ENCODE measurements at regions of chr9 and their contacts with region 1.

Region 1: DNA sequence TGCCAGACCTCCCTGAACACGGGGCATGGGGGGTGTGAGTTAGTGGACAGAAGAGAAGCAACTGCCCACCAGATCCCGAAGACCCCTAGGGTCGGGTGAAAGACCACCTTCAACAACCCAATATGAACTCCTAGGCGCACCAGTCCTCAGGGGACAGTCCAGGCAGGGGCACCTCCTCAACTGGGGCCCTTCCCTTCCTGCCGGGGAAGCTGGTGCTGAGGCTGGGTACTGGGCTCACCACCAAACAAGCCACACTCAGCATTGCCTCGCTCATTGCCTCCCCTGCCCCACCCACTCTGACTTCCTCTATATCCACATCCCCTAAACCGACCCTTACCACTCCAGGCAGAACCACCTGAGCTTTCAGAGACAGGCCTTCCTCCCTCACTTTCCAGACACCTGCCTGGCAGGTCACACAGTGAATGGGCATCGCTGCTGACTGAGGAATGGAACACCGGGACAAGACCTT is 42.5 kb downstream of the SEMA4D start:
- DNase-seq: peak in 7 of 9 donors; percentile 44 to 69 (median 64)
- ATAC-seq: peak; percentile 68
- H3K4me3 ChIP-seq: peak overlapping the region; percentile 42
- H3K4me3 Mint-ChIP-seq: peak overlapping the region; percentile 75 to 88 (median 84)
- H3K27ac ChIP-seq: peak overlapping the region; percentile 77
- H3K27ac Mint-ChIP-seq: peak overlapping the region; percentile 73 to 99 (median 98)
- H3K4me1 ChIP-seq: peaks cover 51 to 88% of the 10 kb centered on the region in 2 donors
- H3K4me1 Mint-ChIP-seq: peaks cover 70 to 100% (median 89%) of the 10 kb centered on the region in 7 donors
- H3K27me3 ChIP-seq: no peaks in the 10 kb centered on the region
- H3K27me3 Mint-ChIP-seq: no peaks in the 10 kb centered on the region

Region 2: DNA sequence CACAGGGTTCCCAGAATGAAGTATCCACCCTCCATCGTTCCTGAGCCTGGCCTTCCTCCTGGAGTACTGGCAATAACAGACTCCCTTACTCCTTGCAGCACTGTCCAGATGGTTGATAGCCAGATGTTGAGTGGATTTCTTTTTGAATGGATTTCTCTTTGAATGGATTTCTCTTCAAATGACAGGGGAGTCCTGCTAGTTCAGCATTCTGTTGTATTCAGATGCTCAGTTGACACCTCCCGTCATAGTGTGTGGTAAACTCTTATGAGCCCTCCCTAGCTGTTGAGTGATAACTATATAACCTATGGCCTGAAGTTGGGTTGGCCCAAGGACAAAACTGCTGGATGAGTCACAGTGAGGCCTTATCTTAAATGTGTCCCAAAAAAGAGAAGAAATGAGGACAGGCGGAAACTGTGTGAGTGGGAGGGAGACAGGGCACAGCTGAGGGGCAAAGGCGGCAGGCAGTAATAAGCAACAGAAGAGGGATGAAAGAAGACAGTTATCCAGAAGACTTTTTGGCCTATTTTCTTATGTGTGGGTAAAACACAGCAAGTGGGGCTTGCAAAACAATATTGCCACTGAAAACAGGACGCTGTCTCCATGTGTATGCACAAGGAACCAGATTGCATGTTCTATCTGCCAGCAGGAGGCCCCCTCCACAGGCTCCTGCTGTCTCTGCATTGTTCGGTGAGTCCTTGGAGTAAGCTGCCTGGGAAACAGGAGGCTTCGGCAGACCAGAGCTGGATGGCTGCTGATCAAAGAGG is 673.6 kb before region 1 on chr9:
- CTCF ChIA-PET with region 1: no interaction called
- POLR2A ChIA-PET with region 1: no interaction called
- intact Hi-C with region 1: no loop called
- DNase-seq: no peak
- ATAC-seq: no peak
- H3K4me3 ChIP-seq: no peak overlapping the region
- H3K4me3 Mint-ChIP-seq: no peak overlapping the region
- H3K27ac ChIP-seq: no peak overlapping the region
- H3K27ac Mint-ChIP-seq: no peak overlapping the region
- H3K4me1 ChIP-seq: no peaks in the 10 kb centered on the region
- H3K4me1 Mint-ChIP-seq: peaks cover 0 to 8% (median 5%) of the 10 kb centered on the region in 7 donors
- H3K27me3 ChIP-seq: no peaks in the 10 kb centered on the region
- H3K27me3 Mint-ChIP-seq: peaks cover 0 to 22% (median 17%) of the 10 kb centered on the region in 5 donors

Region 3: DNA sequence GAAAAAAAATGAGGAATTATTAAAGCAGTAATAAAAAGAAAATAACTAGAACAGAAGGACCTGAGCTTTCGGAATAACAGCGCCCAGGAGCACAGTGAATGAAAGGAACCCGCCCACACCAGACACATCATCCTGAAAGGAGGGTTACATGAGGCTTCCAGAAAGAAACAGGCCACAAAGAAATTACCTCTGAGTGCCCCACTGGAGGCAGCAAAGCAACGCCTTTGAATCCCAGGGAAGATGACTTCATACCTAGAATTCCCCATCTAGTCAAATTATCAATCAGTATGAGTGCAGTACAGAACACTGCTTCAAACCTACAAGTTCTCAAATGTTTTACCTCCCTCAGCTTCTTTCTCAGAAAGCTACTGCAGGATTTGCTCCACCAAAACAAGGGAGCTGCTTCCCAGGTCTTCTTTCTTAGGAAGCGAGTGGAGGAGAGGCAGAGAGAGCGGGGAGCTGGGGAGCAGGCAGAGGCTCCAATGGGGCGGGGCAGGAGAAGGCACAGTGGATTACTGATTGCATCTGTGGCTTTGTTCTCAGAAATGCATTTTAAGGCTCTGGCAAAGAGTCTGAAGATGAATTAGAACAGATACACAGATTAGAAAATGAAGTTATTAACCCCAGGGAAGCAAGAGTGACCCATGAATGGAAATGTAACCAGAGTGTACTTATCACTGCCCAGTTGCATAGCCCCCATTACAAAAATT is 44.6 kb before region 1 on chr9:
- CTCF ChIA-PET with region 1: no interaction called
- POLR2A ChIA-PET with region 1: interaction called, 6 read pairs
- intact Hi-C with region 1: loop called in 1 of 2 experiments (anchors 2 kb)
- DNase-seq: peak in 2 of 9 donors; percentile 29 to 60
- ATAC-seq: peak; percentile 37
- H3K4me3 ChIP-seq: no peak overlapping the region
- H3K4me3 Mint-ChIP-seq: peak overlapping the region in 9 of 10 donors; percentile 7 to 85 (median 54)
- H3K27ac ChIP-seq: peak overlapping the region; percentile 20
- H3K27ac Mint-ChIP-seq: peak overlapping the region; percentile 67 to 93 (median 84)
- H3K4me1 ChIP-seq: peaks cover 57 to 62% of the 10 kb centered on the region in 2 donors
- H3K4me1 Mint-ChIP-seq: peaks cover 56 to 100% (median 93%) of the 10 kb centered on the region in 7 donors
- H3K27me3 ChIP-seq: no peaks in the 10 kb centered on the region
- H3K27me3 Mint-ChIP-seq: no peaks in the 10 kb centered on the region

Region 4: DNA sequence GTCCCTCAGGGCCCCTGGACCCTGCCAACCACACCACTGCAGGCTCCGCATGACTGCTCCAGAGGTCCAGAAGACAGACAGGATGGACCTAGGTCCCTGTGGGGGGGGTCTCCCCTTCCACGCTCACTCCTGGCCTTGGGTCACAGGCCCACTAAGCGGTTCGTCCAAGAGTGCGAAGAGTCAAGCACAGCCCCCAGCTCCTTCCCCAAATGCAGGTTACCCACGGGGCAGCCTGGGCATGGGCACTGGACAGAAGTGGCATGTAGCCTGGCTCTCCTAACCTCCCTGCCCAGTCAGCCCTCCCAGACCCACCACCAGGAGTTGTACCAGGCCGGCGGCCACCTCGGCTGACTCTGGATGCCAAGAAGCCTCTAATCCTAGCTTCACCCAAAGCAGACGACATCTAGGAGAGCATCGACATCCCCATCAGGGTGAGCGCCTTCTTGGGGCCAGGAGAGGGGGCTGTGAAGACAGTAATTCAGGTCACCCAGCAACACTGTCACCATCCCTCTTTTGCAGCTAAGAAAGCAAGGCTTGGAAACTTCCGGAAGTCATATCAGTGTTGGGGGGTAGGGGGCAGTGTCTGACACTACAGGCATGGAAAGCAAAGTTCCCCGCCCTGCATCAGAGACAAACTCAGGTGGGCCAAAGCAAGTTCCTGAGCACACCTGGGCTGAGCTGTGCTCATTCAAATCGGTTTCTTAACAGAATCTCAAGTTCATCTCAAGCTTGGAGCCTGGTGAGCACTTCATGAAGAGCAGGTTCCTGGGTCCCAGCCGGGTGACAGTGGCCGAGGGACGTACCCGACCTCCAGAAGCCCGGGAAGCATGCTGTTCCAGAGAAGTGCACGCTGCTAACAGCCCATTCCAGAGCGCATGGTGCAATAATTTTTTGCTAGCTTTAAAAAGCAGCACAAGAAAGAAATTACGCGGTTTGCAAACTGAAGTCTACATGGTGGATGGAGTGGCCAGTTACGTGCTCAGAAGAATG is 26.2 kb before region 1 on chr9:
- CTCF ChIA-PET with region 1: interaction called, 11 read pairs
- POLR2A ChIA-PET with region 1: interaction called, 3 read pairs
- intact Hi-C with region 1: no loop called
- DNase-seq: peak in 7 of 9 donors; percentile 68 to 83 (median 77)
- ATAC-seq: peak; percentile 76
- H3K4me3 ChIP-seq: no peak overlapping the region
- H3K4me3 Mint-ChIP-seq: peak overlapping the region in 9 of 10 donors; percentile 38 to 78 (median 63)
- H3K27ac ChIP-seq: peak overlapping the region; percentile 63
- H3K27ac Mint-ChIP-seq: peak overlapping the region; percentile 84 to 97 (median 92)
- H3K4me1 ChIP-seq: peaks cover 81 to 84% of the 10 kb centered on the region in 2 donors
- H3K4me1 Mint-ChIP-seq: peaks cover 67 to 100% (median 95%) of the 10 kb centered on the region in 7 donors
- H3K27me3 ChIP-seq: no peaks in the 10 kb centered on the region
- H3K27me3 Mint-ChIP-seq: no peaks in the 10 kb centered on the region

Region 5: DNA sequence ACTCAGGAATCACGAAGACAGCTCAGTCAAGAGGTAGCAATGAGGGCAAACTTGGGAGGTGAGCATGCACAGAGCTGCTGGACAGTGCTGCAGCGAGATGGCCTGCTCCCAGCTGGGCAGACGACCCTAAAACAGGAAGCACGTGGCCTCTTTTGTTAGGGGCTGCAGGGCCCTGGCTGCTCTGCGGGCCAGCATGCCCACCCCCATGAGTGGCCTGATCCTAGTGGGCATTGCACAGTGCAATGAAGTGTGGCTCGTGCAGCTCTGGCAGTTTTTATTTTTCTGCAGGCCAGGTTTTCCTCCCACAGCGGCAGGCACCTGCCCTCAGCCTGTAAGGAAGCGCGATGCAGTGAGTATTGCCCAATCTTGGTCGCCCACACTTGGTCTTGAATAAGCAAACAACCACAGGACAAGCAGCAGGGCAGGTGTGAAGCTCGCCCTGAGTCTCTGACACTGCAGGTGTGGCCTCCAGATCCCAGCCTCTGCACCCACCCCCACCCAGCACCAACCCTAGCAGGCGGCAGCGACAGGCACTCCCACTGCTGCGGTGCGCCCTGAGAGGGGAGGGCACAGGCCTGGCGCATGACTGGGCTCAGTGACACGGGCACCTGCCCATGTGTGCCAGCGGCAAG is 18.3 kb before region 1 on chr9:
- CTCF ChIA-PET with region 1: no interaction called
- POLR2A ChIA-PET with region 1: interaction called, 34 read pairs
- intact Hi-C with region 1: loop called in 1 of 2 experiments (anchors 2 kb)
- DNase-seq: peak in 6 of 9 donors; percentile 42 to 59 (median 56)
- ATAC-seq: peak; percentile 83
- H3K4me3 ChIP-seq: no peak overlapping the region
- H3K4me3 Mint-ChIP-seq: peak overlapping the region; percentile 44 to 80 (median 74)
- H3K27ac ChIP-seq: peak overlapping the region; percentile 62
- H3K27ac Mint-ChIP-seq: peak overlapping the region; percentile 80 to 95 (median 85)
- H3K4me1 ChIP-seq: peaks cover 74 to 75% of the 10 kb centered on the region in 2 donors
- H3K4me1 Mint-ChIP-seq: peaks cover 75 to 98% (median 92%) of the 10 kb centered on the region in 7 donors
- H3K27me3 ChIP-seq: no peaks in the 10 kb centered on the region
- H3K27me3 Mint-ChIP-seq: no peaks in the 10 kb centered on the region

Region 6: DNA sequence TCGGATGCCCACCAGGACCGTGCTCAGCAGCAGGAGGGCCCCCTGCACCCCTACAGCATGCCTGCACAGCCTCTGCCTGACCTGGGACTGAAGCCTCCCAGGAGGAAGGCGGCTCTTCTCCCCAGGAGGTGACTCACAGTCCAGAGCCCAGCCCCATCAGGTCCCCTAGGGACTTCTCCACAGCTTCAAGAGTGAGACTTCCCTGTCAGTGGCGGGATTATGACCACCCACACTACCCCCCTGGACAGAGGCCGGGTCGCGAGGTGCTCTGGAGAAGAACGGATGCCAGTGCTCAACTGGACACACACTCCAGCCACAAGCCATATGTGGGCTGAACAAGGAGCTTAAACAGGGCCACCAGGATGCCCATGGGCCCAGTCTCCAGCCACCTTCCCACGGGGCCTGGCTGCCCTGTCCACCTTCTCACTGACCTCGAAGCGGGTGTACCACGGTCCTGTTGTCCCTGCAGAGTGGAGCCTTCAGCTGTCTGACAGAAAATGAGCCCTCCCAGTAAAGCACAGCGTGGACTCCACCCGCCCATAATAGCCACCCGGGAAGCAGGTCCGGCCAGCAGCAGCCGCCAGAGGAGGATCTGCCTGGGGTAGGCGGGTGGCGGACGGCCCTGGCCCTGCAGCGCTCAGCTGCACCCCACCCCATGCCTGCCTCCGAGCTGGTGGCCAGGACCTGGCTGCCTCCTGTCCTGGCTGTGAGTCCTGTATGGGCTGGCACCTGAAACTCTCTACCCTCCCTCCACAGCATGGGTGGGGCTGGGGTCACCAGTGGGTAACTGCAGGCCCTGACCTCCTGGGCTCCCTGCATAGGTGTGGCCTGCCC is 12.2 kb before region 1 on chr9:
- CTCF ChIA-PET with region 1: interaction called, 3 read pairs
- POLR2A ChIA-PET with region 1: interaction called, 34 read pairs
- intact Hi-C with region 1: loop called in 1 of 2 experiments (anchors 1 kb)
- DNase-seq: no peak
- ATAC-seq: peak; percentile 36
- H3K4me3 ChIP-seq: no peak overlapping the region
- H3K4me3 Mint-ChIP-seq: peak overlapping the region in 3 of 10 donors; percentile 54 to 82 (median 67)
- H3K27ac ChIP-seq: peak overlapping the region; percentile 72
- H3K27ac Mint-ChIP-seq: peak overlapping the region; percentile 76 to 99 (median 96)
- H3K4me1 ChIP-seq: peaks cover 84 to 89% of the 10 kb centered on the region in 2 donors
- H3K4me1 Mint-ChIP-seq: peaks cover 62 to 91% (median 85%) of the 10 kb centered on the region in 7 donors
- H3K27me3 ChIP-seq: no peaks in the 10 kb centered on the region
- H3K27me3 Mint-ChIP-seq: no peaks in the 10 kb centered on the region

Region 7: GRCh38 chr9:89489548-89490530 is 34.4 kb after region 1 on chr9:
- CTCF ChIA-PET with region 1: interaction called, 6 read pairs
- POLR2A ChIA-PET with region 1: interaction called, 12 read pairs
- intact Hi-C with region 1: loop called in 1 of 2 experiments (anchors 5 kb)
- DNase-seq: peak in 8 of 9 donors; percentile 15 to 87 (median 78)
- ATAC-seq: peak; percentile 90
- H3K4me3 ChIP-seq: peak overlapping the region; percentile 22
- H3K4me3 Mint-ChIP-seq: peak overlapping the region; percentile 60 to 100 (median 88)
- H3K27ac ChIP-seq: peak overlapping the region; percentile 69
- H3K27ac Mint-ChIP-seq: peak overlapping the region; percentile 82 to 98 (median 89)
- H3K4me1 ChIP-seq: peaks cover 81 to 82% of the 10 kb centered on the region in 2 donors
- H3K4me1 Mint-ChIP-seq: peaks cover 78 to 100% (median 92%) of the 10 kb centered on the region in 7 donors
- H3K27me3 ChIP-seq: no peaks in the 10 kb centered on the region
- H3K27me3 Mint-ChIP-seq: no peaks in the 10 kb centered on the region

Region 8: GRCh38 chr9:89497978-89498851 is 42.8 kb after region 1 on chr9 and contains the start of gene SEMA4D:
- CTCF ChIA-PET with region 1: no interaction called
- POLR2A ChIA-PET with region 1: interaction called, 12 read pairs
- intact Hi-C with region 1: loop called in 1 of 2 experiments (anchors 5 kb)
- DNase-seq: peak in 2 of 9 donors; percentile 48 to 71
- ATAC-seq: peak; percentile 22
- H3K4me3 ChIP-seq: peak within 1 kb of the TSS; percentile 67
- H3K4me3 Mint-ChIP-seq: peak within 1 kb of the TSS; percentile 85 to 100 (median 98)
- H3K27ac ChIP-seq: peak within 1 kb of the TSS; percentile 76
- H3K27ac Mint-ChIP-seq: peak within 1 kb of the TSS; percentile 86 to 99 (median 94)
- H3K4me1 ChIP-seq: peaks cover 72 to 75% of the 10 kb centered on the region in 2 donors
- H3K4me1 Mint-ChIP-seq: peaks cover 72 to 90% (median 77%) of the 10 kb centered on the region in 7 donors
- H3K27me3 ChIP-seq: no peaks in the 10 kb centered on the region
- H3K27me3 Mint-ChIP-seq: no peaks in the 10 kb centered on the region
- total RNA-seq, gene SEMA4D: 389 to 465 (median 460) TPM

Region 9: DNA sequence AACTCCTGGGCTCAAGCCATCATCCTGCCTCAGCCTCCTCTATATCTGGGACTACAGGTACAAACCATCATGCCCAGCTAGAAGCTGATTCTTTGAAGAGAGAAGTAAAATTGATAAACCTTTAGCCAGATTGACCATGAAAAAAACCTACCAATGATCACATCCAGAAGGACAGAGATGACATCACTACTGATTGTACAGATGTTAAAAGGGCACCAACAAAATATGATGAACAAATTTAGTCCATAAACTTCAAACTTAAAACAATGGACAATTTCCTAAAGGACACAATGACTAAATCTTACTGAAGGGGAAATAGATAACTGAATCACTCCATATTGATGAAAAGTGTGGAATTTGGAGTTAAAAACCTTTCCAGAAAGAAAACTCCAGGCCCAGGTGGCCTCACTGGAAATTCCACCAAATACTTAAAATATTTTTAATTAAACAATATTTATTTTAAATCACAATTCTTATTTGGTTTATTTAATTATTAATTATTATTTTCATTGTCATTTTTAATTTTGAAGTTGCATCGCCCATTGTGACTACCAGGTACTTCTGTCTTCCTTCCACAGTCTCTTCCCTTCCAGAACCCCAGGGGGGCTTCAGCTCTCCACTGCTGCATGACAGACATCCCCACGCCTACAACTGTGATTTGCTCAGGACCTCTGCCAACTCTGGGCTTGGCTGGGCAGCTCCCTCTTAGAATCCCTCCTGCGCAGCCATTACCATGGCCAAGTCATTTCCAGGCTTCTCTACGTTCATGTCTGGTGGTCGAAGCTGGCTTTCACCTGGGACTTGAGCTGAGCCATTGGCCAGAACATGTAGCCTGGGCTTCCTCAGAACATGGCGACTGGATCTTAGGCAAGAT is 132.9 kb after region 1 on chr9:
- CTCF ChIA-PET with region 1: no interaction called
- POLR2A ChIA-PET with region 1: no interaction called
- intact Hi-C with region 1: no loop called
- DNase-seq: no peak
- ATAC-seq: no peak
- H3K4me3 ChIP-seq: no peak overlapping the region
- H3K4me3 Mint-ChIP-seq: no peak overlapping the region
- H3K27ac ChIP-seq: no peak overlapping the region
- H3K27ac Mint-ChIP-seq: no peak overlapping the region
- H3K4me1 ChIP-seq: no peaks in the 10 kb centered on the region
- H3K4me1 Mint-ChIP-seq: no peaks in the 10 kb centered on the region
- H3K27me3 ChIP-seq: no peaks in the 10 kb centered on the region
- H3K27me3 Mint-ChIP-seq: peaks cover 9 to 61% (median 13%) of the 10 kb centered on the region in 5 donors

Measured in naive thymus-derived CD4-positive, alpha-beta T cell (primary cell).